Activated CD8-positive, alpha-beta T cell treated with anti-CD3 and anti-CD28 coated beads for 36 hours (primary cell): ENCODE measurements at regions of chr3 and their contacts with region 1.

Region 1: GRCh38 chr3:87298111-87298718 is 21.8 kb upstream of the POU1F1 start:
- DNase-seq: no peak
- ATAC-seq: peak; percentile 67
- H3K4me3 Mint-ChIP-seq: no peak overlapping the region
- H3K27ac Mint-ChIP-seq: no peak overlapping the region
- H3K4me1 Mint-ChIP-seq: no peaks in the 10 kb centered on the region
- H3K27me3 Mint-ChIP-seq: no peaks in the 10 kb centered on the region
- CTCF ChIP-seq: peak; percentile 77

Region 2: GRCh38 chr3:87227104-87227834 is 70.9 kb before region 1 on chr3 and contains the start of gene CHMP2B:
- CTCF ChIA-PET with region 1: no interaction called
- POLR2A ChIA-PET with region 1: no interaction called
- intact Hi-C with region 1: no loop called
- DNase-seq: peak; percentile 91
- ATAC-seq: peak; percentile 94
- H3K4me3 Mint-ChIP-seq: peak within 1 kb of the TSS; percentile 95
- H3K27ac Mint-ChIP-seq: peak within 1 kb of the TSS; percentile 95
- H3K4me1 Mint-ChIP-seq: peaks cover 37% of the 10 kb centered on the region
- H3K27me3 Mint-ChIP-seq: peaks cover 6% of the 10 kb centered on the region
- CTCF ChIP-seq: no peak
- total RNA-seq, gene CHMP2B: 22.7 to 26.2 TPM

Region 3: DNA sequence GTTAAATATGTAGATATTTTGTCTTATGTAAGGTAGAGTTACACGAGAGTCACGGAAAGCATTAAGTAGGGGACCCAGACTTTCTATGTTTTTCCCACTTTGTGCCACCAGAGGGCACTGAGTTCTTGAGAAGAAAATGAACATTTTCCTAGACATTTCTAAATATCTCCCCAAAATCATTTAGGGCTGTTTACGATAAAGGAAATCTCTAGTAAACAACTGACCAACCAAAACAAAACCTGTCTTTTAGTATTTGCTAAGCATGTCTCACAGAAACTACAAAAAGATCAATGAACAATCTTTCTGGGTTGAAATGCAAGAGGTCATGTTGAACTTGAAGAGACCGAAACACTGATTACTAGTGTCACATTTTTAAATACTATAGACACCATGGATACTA is 37.9 kb before region 1 on chr3:
- CTCF ChIA-PET with region 1: interaction called, 11 read pairs
- POLR2A ChIA-PET with region 1: no interaction called
- intact Hi-C with region 1: no loop called
- DNase-seq: peak; percentile 69
- ATAC-seq: peak; percentile 55
- H3K4me3 Mint-ChIP-seq: no peak overlapping the region
- H3K27ac Mint-ChIP-seq: no peak overlapping the region
- H3K4me1 Mint-ChIP-seq: peaks cover 3% of the 10 kb centered on the region
- H3K27me3 Mint-ChIP-seq: no peaks in the 10 kb centered on the region
- CTCF ChIP-seq: peak; percentile 75

Region 4: DNA sequence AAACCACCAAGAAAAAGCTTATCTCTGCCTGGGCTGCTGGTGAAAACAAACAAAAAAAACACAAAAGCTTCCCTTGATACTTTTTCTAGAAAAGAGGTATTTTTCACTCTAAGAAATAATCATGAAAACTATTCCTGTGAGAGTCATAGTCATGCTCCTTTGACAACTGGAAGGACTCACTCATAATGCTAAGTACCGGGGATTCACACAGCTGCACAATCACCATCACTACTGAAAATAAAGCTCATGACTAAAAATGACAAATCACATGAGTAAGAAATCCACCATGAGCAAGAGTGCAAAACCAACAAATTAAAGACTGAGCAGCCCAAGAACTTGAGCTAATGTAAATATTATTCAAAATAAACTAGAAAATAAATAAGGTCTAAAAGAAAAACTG is 11.2 kb before region 1 on chr3:
- CTCF ChIA-PET with region 1: interaction called, 14 read pairs
- POLR2A ChIA-PET with region 1: no interaction called
- intact Hi-C with region 1: no loop called
- DNase-seq: no peak
- ATAC-seq: peak; percentile 37
- H3K4me3 Mint-ChIP-seq: no peak overlapping the region
- H3K27ac Mint-ChIP-seq: no peak overlapping the region
- H3K4me1 Mint-ChIP-seq: no peaks in the 10 kb centered on the region
- H3K27me3 Mint-ChIP-seq: peaks cover 1% of the 10 kb centered on the region
- CTCF ChIP-seq: no peak

Region 5: GRCh38 chr3:87324609-87325008 is 26.4 kb after region 1 on chr3:
- CTCF ChIA-PET with region 1: interaction called, 10 read pairs
- POLR2A ChIA-PET with region 1: no interaction called
- intact Hi-C with region 1: no loop called
- DNase-seq: no peak
- ATAC-seq: no peak
- H3K4me3 Mint-ChIP-seq: no peak overlapping the region
- H3K27ac Mint-ChIP-seq: no peak overlapping the region
- H3K4me1 Mint-ChIP-seq: no peaks in the 10 kb centered on the region
- H3K27me3 Mint-ChIP-seq: peaks cover 15% of the 10 kb centered on the region
- CTCF ChIP-seq: no peak

Region 6: GRCh38 chr3:87333393-87333892 is 35.2 kb after region 1 on chr3:
- CTCF ChIA-PET with region 1: interaction called, 10 read pairs
- POLR2A ChIA-PET with region 1: no interaction called
- intact Hi-C with region 1: no loop called
- DNase-seq: peak; percentile 40
- ATAC-seq: peak; percentile 97
- H3K4me3 Mint-ChIP-seq: no peak overlapping the region
- H3K27ac Mint-ChIP-seq: peak overlapping the region; percentile 57
- H3K4me1 Mint-ChIP-seq: peaks cover 16% of the 10 kb centered on the region
- H3K27me3 Mint-ChIP-seq: peaks cover 3% of the 10 kb centered on the region
- CTCF ChIP-seq: no peak

Region 7: GRCh38 chr3:87397210-87397609 is 99.0 kb after region 1 on chr3:
- CTCF ChIA-PET with region 1: no interaction called
- POLR2A ChIA-PET with region 1: no interaction called
- intact Hi-C with region 1: no loop called
- DNase-seq: no peak
- ATAC-seq: no peak
- H3K4me3 Mint-ChIP-seq: no peak overlapping the region
- H3K27ac Mint-ChIP-seq: no peak overlapping the region
- H3K4me1 Mint-ChIP-seq: no peaks in the 10 kb centered on the region
- H3K27me3 Mint-ChIP-seq: no peaks in the 10 kb centered on the region
- CTCF ChIP-seq: no peak

Region 8: GRCh38 chr3:87719060-87719459 is 420.8 kb after region 1 on chr3:
- CTCF ChIA-PET with region 1: no interaction called
- POLR2A ChIA-PET with region 1: no interaction called
- intact Hi-C with region 1: no loop called
- DNase-seq: no peak
- ATAC-seq: no peak
- H3K4me3 Mint-ChIP-seq: no peak overlapping the region
- H3K27ac Mint-ChIP-seq: no peak overlapping the region
- H3K4me1 Mint-ChIP-seq: no peaks in the 10 kb centered on the region
- H3K27me3 Mint-ChIP-seq: no peaks in the 10 kb centered on the region
- CTCF ChIP-seq: no peak

Region 9: GRCh38 chr3:88003115-88003755 is 705.0 kb after region 1 on chr3:
- CTCF ChIA-PET with region 1: interaction called, 3 read pairs
- POLR2A ChIA-PET with region 1: no interaction called
- intact Hi-C with region 1: loop called (anchors 5 kb)
- DNase-seq: no peak
- ATAC-seq: no peak
- H3K4me3 Mint-ChIP-seq: no peak overlapping the region
- H3K27ac Mint-ChIP-seq: no peak overlapping the region
- H3K4me1 Mint-ChIP-seq: peaks cover 3% of the 10 kb centered on the region
- H3K27me3 Mint-ChIP-seq: peaks cover 3% of the 10 kb centered on the region
- CTCF ChIP-seq: peak; percentile 85